ENCODE measurements at regions of chr2 and their contacts with region 1.

Region 1: DNA sequence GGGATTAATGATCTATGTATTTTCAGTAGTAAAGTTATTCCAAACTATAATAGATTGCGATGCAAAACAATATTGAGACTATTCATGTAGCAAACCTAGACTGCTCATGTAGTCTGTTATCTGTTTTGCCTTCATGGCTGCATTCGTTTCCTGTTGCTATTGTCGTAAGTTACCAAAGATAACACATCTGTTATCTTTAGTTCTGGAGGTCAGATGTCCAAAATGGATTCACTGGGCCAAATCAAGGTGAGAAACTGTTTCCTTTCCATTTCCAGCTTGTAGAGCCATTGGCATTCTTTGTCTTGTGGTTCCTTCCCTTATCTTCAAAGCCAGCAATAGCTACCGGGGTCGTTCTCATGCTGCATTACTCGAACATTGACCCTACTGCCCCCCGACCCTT is 20.9 kb downstream of the ITGAV start:
- DNase-seq: no peak
- ATAC-seq: no peak
- H3K4me3 ChIP-seq: peak overlapping the region in 6 of 12 donors; percentile 3 to 55 (median 46)
- H3K27ac ChIP-seq: peak overlapping the region in 10 of 12 donors; percentile 0 to 83 (median 24)
- H3K4me1 ChIP-seq: peaks cover 0 to 44% (median 19%) of the 10 kb centered on the region in 12 donors
- H3K27me3 ChIP-seq: no peaks in the 10 kb centered on the region
- CTCF ChIP-seq: no peak
- POLR2A ChIP-seq: no peak

Region 2: GRCh38 chr2:186477790-186478189 is 133.0 kb before region 1 on chr2:
- intact Hi-C with region 1: no loop called
- DNase-seq: no peak
- ATAC-seq: no peak
- H3K4me3 ChIP-seq: no peak overlapping the region
- H3K27ac ChIP-seq: no peak overlapping the region
- H3K4me1 ChIP-seq: no peaks in the 10 kb centered on the region
- H3K27me3 ChIP-seq: no peaks in the 10 kb centered on the region
- CTCF ChIP-seq: no peak
- POLR2A ChIP-seq: no peak

Region 3: DNA sequence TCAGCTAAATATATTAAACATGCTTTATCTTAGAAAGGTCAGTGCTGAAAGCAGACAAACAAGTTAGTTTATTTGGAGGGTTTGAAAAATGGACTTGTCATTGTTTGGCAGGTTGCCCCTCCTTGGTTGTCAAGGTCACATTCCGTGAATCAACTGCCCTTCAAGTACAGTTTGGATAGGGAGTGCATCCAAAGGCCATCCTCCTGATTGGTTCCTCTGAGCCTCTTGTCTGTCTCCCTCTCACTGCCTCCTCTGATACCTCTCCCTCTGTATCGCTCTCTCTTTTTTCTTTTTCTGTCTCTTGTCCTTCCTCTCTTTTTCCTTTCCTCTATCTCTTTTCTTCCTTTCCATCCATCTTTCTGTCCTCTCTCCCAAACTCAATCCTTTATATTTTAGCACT is 15.6 kb before region 1 on chr2:
- intact Hi-C with region 1: loop called in 1 of 10 experiments (anchors 2 kb)
- DNase-seq: peak in 4 of 5 donors; percentile 52 to 67 (median 58)
- ATAC-seq: peak; percentile 59 to 78 (median 70)
- H3K4me3 ChIP-seq: no peak overlapping the region
- H3K27ac ChIP-seq: peak overlapping the region in 11 of 12 donors; percentile 22 to 97 (median 57)
- H3K4me1 ChIP-seq: peaks cover 0 to 84% (median 52%) of the 10 kb centered on the region in 12 donors
- H3K27me3 ChIP-seq: no peaks in the 10 kb centered on the region
- CTCF ChIP-seq: no peak
- POLR2A ChIP-seq: no peak

Region 4: DNA sequence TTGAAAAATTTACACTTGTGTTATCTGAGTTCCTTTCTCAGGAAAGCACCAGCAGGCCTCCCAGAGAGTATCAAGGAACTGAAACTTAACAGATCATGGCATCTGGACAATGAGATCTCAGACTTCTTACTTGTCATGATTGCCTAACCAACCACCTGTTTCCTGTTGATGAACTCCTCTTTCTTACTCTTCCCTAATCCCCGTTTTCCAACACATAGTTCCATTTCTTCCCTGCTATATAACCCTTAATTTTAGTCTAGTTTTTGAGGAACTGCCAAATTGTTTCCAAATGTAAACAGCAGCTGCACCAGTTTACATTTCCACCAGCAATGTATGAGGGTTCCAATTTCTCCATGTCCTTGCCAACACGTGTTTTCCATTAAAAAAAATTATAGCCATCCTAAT is 77.0 kb after region 1 on chr2:
- intact Hi-C with region 1: no loop called
- DNase-seq: no peak
- ATAC-seq: no peak
- H3K4me3 ChIP-seq: no peak overlapping the region
- H3K27ac ChIP-seq: no peak overlapping the region
- H3K4me1 ChIP-seq: no peaks in the 10 kb centered on the region
- H3K27me3 ChIP-seq: no peaks in the 10 kb centered on the region
- CTCF ChIP-seq: no peak
- POLR2A ChIP-seq: no peak